ENCODE measurements at regions of chr12 and their contacts with region 1.

Region 1: GRCh38 chr12:107992870-107993451 is 136.1 kb upstream of the WSCD2 start:
- DNase-seq: peak; percentile 14
- ATAC-seq: peak; percentile 61
- H3K4me3 Mint-ChIP-seq: no peak overlapping the region
- H3K27ac Mint-ChIP-seq: no peak overlapping the region
- H3K4me1 Mint-ChIP-seq: no peaks in the 10 kb centered on the region
- H3K27me3 Mint-ChIP-seq: peaks cover 18% of the 10 kb centered on the region
- CTCF ChIP-seq: peak; percentile 59

Region 2: DNA sequence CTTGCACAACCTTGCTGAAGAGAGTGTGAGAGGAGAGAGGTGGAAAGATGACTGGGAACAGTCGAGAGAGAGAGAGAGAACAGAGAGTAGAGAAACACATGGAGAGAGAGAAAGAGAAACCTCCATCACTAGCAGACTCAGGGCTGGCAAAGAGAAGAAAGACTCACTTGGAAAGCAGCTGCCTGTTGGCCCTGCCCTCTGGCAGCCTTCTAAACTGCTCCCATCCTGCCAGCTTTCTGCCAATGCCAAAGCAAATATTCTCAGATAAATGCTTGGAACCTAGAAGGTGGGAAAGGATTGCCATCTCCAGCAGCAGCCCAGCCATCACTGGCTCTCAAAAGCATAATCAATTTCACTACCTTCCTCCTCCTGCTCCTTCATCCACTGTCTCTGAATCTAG is 28.2 kb after region 1 on chr12:
- CTCF ChIA-PET with region 1: no interaction called
- POLR2A ChIA-PET with region 1: no interaction called
- intact Hi-C with region 1: no loop called
- DNase-seq: no peak
- ATAC-seq: no peak
- H3K4me3 Mint-ChIP-seq: no peak overlapping the region
- H3K27ac Mint-ChIP-seq: no peak overlapping the region
- H3K4me1 Mint-ChIP-seq: no peaks in the 10 kb centered on the region
- H3K27me3 Mint-ChIP-seq: peaks cover 4% of the 10 kb centered on the region
- CTCF ChIP-seq: no peak

Region 3: DNA sequence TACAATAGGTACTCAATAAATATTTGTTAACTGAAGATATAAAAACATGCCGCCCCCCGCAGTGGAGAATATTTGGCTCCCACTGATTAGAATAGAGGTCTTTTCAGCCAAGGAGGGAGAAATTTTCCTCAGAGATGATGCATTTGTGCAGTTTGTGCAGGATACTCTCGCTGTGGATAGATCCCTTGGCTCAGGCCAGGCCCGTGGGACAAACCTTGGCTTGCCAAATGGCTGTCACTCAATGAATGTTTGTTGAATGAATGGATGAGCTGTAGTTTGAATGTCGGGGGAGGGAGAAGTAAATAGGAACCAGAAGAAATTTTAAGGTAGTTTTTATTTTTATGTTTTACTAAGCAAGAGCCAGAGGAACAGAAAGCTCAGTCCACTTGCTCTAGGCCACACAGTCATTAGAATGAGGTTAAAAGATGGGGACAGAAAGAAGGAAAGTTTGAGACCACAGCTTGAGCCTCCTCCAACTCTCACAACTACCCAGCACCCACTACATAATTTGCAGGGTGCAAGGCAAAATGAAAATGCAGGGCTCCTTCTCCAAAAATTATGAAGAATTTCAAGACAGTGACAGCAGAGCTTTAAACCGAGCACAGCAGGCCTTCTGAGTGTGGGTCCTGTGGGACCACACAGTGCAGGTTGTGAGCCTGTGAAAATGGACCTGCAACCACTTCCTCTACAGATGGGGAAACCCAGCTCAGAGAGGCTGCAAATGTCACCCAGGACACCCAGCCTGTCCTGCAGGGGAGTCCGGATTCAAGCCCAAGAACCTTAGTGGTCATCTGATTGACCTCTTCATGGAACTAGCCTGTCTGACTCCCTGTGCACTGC is 187.5 kb after region 1 on chr12:
- CTCF ChIA-PET with region 1: no interaction called
- POLR2A ChIA-PET with region 1: no interaction called
- intact Hi-C with region 1: loop called (anchors 10 kb)
- DNase-seq: no peak
- ATAC-seq: no peak
- H3K4me3 Mint-ChIP-seq: no peak overlapping the region
- H3K27ac Mint-ChIP-seq: no peak overlapping the region
- H3K4me1 Mint-ChIP-seq: no peaks in the 10 kb centered on the region
- H3K27me3 Mint-ChIP-seq: no peaks in the 10 kb centered on the region
- CTCF ChIP-seq: no peak

Region 4: GRCh38 chr12:108214486-108214885 is 221.5 kb after region 1 on chr12:
- CTCF ChIA-PET with region 1: no interaction called
- POLR2A ChIA-PET with region 1: no interaction called
- intact Hi-C with region 1: no loop called
- DNase-seq: peak; percentile 38
- ATAC-seq: no peak
- H3K4me3 Mint-ChIP-seq: no peak overlapping the region
- H3K27ac Mint-ChIP-seq: no peak overlapping the region
- H3K4me1 Mint-ChIP-seq: no peaks in the 10 kb centered on the region
- H3K27me3 Mint-ChIP-seq: peaks cover 14% of the 10 kb centered on the region
- CTCF ChIP-seq: no peak

Region 5: GRCh38 chr12:108457006-108457733 is 464.2 kb after region 1 on chr12:
- CTCF ChIA-PET with region 1: interaction called, 10 read pairs
- POLR2A ChIA-PET with region 1: no interaction called
- intact Hi-C with region 1: loop called (anchors 10 kb)
- DNase-seq: peak; percentile 25
- ATAC-seq: peak; percentile 75
- H3K4me3 Mint-ChIP-seq: no peak overlapping the region
- H3K27ac Mint-ChIP-seq: no peak overlapping the region
- H3K4me1 Mint-ChIP-seq: no peaks in the 10 kb centered on the region
- H3K27me3 Mint-ChIP-seq: peaks cover 1% of the 10 kb centered on the region
- CTCF ChIP-seq: peak; percentile 67

Region 6: DNA sequence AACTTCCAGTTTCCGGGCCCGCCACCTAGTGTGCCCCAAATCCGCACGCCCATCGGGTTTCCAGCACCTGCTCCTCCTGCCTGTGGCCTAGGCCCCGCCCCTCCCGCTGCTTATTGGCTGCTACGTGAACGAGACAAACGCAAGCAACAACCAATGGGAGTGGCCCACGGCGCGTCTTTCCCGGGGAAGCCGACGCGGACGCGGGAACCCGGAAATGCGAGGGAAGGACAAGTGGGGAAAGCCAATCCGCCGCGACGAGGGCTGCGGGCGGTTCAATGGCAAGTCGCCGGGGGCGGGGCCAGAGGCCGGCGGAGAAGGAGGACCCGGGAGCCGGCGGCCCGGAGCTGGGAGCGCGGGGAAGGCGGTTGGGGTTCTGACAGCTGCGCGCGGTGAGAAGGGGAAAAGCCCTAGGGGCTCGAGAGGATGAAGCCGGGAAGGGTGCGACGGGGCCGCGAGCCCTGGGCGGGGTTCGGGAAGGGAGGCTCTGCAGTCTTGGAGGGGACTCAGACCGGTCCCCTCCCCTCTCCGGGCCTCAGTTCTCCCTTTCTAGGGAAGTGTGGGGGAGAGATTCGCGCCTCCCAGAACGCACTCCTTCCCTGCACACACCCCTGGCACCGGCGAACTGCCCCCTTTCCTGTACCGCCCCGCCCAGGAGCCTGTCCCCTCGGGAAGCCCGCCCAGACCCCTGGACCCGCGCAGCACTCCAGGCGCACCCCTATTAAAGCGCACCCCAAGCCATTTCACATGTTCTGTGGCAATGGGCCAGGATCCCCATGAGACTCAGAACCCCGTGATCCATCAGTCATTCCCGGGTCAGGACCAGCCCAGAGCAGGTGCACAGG is 522.2 kb after region 1 on chr12 and contains the start of gene FICD:
- CTCF ChIA-PET with region 1: interaction called, 36 read pairs
- POLR2A ChIA-PET with region 1: no interaction called
- intact Hi-C with region 1: loop called (anchors 5 kb)
- DNase-seq: peak; percentile 100
- ATAC-seq: peak; percentile 96
- H3K4me3 Mint-ChIP-seq: peak within 1 kb of the TSS; percentile 77
- H3K27ac Mint-ChIP-seq: peak within 1 kb of the TSS; percentile 63
- H3K4me1 Mint-ChIP-seq: peaks cover 27% of the 10 kb centered on the region
- H3K27me3 Mint-ChIP-seq: no peaks in the 10 kb centered on the region
- CTCF ChIP-seq: no peak
- total RNA-seq, gene FICD: 3.4 to 3.9 TPM